Activated naive CD4-positive, alpha-beta T cell treated with anti-CD3 and anti-CD28 coated beads for 36 hours (primary cell): ENCODE measurements at regions of chr7 and their contacts with region 1.

Region 1: DNA sequence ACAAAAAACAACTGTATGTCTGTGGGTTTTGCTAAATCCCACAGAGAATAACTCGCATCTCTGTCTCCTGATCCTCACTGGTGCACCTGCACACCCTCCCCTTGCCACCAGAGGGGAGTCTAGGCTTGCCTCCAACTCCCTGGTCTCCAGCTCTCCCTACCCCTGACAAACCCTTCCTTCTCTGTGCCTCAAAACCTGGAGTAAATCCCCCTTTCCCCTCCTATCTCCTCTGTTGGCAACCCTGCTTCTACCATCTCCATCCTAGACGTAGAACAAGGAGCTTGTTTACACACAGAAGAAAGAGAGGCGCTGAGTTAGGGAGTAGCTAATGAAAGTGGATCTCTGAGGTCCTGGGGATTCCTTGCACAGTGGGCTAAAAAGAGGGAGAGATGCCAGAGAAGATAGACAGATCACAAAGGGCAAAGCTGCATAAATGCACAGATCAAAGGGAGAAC is 6.0 kb downstream of the MBLAC1 start:
- DNase-seq: peak; percentile 82
- H3K4me3 Mint-ChIP-seq: no peak overlapping the region
- H3K27ac Mint-ChIP-seq: no peak overlapping the region
- H3K4me1 Mint-ChIP-seq: peaks cover 21% of the 10 kb centered on the region
- H3K27me3 Mint-ChIP-seq: no peaks in the 10 kb centered on the region

Region 2: DNA sequence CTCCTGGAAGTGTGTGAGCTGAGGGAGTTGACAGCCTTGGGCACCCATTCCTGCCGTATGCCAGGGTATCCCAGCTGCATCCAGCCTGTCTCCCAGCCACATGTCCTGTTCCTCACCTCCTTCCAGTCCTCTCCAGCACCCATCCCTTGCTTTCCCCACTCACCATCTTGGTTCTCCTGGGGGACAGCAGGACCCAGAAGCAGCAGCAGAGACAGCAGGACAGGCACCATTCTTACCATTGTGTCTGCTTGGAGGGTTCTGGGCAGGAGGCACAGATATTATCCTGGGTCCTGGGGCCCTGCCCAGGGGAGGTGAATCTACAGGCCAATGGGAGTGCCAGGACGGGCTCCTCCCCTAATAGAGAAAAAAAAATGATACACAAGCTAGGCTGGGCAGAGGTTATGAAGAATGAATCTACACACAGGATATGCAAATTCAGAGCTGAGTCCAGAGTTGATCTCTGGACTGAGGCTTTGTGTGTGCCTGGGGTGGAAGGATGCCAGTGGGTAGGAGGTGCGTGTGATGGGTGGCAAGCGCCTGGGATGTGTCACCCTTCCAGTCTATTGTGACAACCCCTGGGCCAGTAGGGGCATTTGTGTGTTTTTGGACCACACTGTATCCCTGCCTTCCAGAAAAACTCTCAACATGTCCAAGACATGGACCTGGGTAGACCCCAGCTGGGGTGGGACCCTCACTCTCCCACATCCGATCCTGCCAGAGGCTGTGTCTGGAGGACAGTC is 156.8 kb before region 1 on chr7 and contains the start of gene AZGP1:
- CTCF ChIA-PET with region 1: interaction called, 3 read pairs
- intact Hi-C with region 1: loop called (anchors 1 kb)
- DNase-seq: no peak
- H3K4me3 Mint-ChIP-seq: no peak within 1 kb of the TSS
- H3K27ac Mint-ChIP-seq: no peak within 1 kb of the TSS
- H3K4me1 Mint-ChIP-seq: no peaks in the 10 kb centered on the region
- H3K27me3 Mint-ChIP-seq: peaks cover 2% of the 10 kb centered on the region
- total RNA-seq, gene AZGP1: not detected

Region 3: DNA sequence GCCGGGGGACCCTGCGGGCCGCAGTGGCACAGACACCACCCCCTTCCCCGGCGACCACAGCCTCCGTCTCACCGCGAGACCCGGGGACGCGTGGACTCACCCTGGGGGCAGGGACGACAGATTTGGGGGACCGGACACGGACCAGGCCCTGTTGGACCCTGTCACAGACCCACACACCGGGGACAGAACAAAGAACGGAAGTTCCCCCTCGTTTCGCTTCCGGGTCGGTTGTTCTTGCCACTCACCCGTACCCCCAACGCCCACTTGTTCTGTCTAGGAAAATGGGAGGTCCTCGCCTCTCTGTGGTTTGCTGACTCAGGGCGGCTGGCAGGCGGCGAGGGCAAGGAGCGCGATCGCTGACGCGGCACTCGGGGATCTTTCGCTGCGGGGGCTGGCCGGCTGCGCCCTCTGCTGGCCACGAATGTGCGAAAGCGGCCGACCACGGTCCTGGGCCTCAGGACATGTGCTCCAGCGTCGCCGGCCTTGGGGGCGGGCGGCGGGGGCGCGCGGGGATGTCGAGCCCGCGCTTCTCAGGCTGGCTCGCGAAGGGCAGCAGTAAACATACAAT is 51.1 kb before region 1 on chr7 and contains the start of gene ZNF3:
- CTCF ChIA-PET with region 1: interaction called, 3 read pairs
- intact Hi-C with region 1: loop called (anchors 1 kb)
- DNase-seq: peak; percentile 99
- H3K4me3 Mint-ChIP-seq: peak within 1 kb of the TSS; percentile 88
- H3K27ac Mint-ChIP-seq: peak within 1 kb of the TSS; percentile 86
- H3K4me1 Mint-ChIP-seq: peaks cover 29% of the 10 kb centered on the region
- H3K27me3 Mint-ChIP-seq: no peaks in the 10 kb centered on the region
- total RNA-seq, gene ZNF3: 13.1 to 14.0 TPM

Region 4: GRCh38 chr7:100208911-100209408 is 76.2 kb after region 1 on chr7:
- CTCF ChIA-PET with region 1: interaction called, 13 read pairs
- intact Hi-C with region 1: no loop called
- DNase-seq: peak; percentile 78
- H3K4me3 Mint-ChIP-seq: peak overlapping the region; percentile 68
- H3K27ac Mint-ChIP-seq: peak overlapping the region; percentile 92
- H3K4me1 Mint-ChIP-seq: peaks cover 52% of the 10 kb centered on the region
- H3K27me3 Mint-ChIP-seq: no peaks in the 10 kb centered on the region

Region 5: GRCh38 chr7:100271716-100272537 is 139.2 kb after region 1 on chr7:
- CTCF ChIA-PET with region 1: no interaction called
- intact Hi-C with region 1: loop called (anchors 1 kb)
- DNase-seq: peak; percentile 98
- H3K4me3 Mint-ChIP-seq: peak overlapping the region; percentile 70
- H3K27ac Mint-ChIP-seq: no peak overlapping the region
- H3K4me1 Mint-ChIP-seq: peaks cover 11% of the 10 kb centered on the region
- H3K27me3 Mint-ChIP-seq: no peaks in the 10 kb centered on the region

Region 6: DNA sequence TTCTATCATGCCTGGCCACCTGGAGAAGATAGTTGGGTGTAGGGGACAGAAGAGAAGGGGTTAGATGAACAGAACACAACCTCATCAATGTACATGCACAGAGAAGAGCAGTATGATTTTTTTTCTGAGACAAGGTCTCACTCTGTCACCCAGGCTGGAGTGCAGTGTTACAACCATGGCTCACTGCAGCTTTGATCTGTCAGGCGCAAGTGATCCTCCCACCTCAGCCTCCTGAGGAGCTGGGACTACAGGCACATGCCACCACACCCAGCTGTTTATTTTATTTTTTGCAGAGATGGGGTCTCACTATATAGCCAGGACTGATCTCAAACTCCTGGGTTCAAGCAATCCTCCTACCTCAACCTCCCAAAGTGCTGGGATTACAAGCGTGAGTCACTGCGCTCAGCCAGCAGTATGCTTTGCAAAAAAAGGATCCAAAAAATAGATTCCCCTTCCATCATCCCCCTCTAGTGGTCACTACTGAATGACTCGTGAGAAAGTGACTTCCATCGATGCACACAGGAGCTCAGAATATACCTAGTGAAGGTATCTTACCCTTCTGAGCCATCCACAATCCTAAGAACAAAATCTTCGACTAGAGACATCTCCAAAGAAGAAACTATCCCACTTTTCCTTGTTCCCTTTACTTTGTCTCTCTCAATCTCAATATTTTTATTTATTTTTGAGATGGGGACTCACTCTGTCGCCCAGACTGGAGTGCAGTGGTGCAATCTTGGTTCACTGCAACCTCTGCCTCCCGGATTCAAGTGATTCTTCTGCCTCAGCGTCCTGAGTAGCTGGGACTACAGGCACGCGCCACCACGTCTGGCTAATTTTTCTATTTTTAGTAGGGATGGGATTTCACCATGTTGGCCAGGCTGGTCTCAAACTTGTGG is 274.8 kb after region 1 on chr7:
- CTCF ChIA-PET with region 1: interaction called, 60 read pairs
- intact Hi-C with region 1: loop called (anchors 1 kb)
- DNase-seq: peak; percentile 61
- H3K4me3 Mint-ChIP-seq: no peak overlapping the region
- H3K27ac Mint-ChIP-seq: no peak overlapping the region
- H3K4me1 Mint-ChIP-seq: peaks cover 2% of the 10 kb centered on the region
- H3K27me3 Mint-ChIP-seq: no peaks in the 10 kb centered on the region